MCF 10A (cell line): ENCODE measurements at regions of chr10 and their contacts with region 1.

Region 1: DNA sequence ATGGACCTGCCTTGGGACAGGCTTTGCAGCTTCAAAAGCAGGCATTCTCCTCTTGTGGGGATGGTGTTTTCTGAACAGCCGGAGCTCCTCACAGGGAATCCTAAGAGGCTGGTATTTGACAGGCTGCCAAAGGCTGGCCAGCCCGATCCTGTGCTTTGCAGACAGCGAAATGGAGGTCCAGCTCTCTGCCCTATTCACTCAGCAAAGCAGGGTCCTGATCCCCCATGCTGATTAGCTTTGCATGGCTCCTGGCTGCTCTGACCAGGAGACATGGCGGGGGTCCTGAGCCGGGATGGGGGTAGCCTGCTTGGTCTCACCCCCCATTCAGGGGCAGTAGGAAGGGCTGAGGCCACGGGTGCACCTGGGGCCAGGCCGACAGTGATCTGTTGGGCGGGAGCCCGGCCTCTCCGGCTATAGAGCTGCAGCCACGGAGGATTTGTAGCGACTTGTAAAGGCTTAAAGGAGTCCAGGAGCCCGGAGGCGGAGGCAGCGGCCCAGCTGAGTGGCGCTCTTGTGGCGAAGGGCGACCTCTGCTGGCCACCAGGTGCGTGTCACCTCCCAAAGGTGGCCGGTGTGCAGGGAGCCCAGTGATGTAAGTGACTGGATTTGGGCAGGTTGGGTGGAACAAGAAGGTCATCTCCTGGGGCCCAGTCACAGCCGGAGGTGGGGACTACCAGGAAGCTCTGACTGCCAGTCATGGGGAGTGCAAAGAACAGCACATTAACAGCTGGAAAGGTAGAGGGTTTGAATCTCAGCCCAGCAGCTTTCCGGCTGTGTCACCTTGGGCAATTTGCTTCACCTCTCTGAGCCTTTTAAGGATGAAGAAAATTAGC is 126.5 kb downstream of the ZMIZ1 start:
- DNase-seq: peak; percentile 87
- H3K4me3 Mint-ChIP-seq: no peak overlapping the region
- H3K27ac Mint-ChIP-seq: no peak overlapping the region
- H3K4me1 Mint-ChIP-seq: peaks cover 27% of the 10 kb centered on the region
- H3K27me3 Mint-ChIP-seq: no peaks in the 10 kb centered on the region
- CTCF ChIP-seq: peak; percentile 96

Region 2: GRCh38 chr10:78211561-78212051 is 983.7 kb before region 1 on chr10:
- CTCF ChIA-PET with region 1: interaction called, 10 read pairs
- POLR2A ChIA-PET with region 1: interaction called, 3 read pairs
- intact Hi-C with region 1: loop called (anchors 1 kb)
- DNase-seq: peak; percentile 59
- H3K4me3 Mint-ChIP-seq: no peak overlapping the region
- H3K27ac Mint-ChIP-seq: peak overlapping the region; percentile 64
- H3K4me1 Mint-ChIP-seq: peaks cover 10% of the 10 kb centered on the region
- H3K27me3 Mint-ChIP-seq: peaks cover 34% of the 10 kb centered on the region
- CTCF ChIP-seq: peak; percentile 62

Region 3: GRCh38 chr10:78432583-78432982 is 762.7 kb before region 1 on chr10:
- CTCF ChIA-PET with region 1: interaction called, 11 read pairs
- POLR2A ChIA-PET with region 1: no interaction called
- intact Hi-C with region 1: no loop called
- DNase-seq: no peak
- H3K4me3 Mint-ChIP-seq: no peak overlapping the region
- H3K27ac Mint-ChIP-seq: no peak overlapping the region
- H3K4me1 Mint-ChIP-seq: no peaks in the 10 kb centered on the region
- H3K27me3 Mint-ChIP-seq: peaks cover 76% of the 10 kb centered on the region
- CTCF ChIP-seq: no peak

Region 4: GRCh38 chr10:78756604-78757349 is 438.5 kb before region 1 on chr10:
- CTCF ChIA-PET with region 1: no interaction called
- POLR2A ChIA-PET with region 1: no interaction called
- intact Hi-C with region 1: loop called (anchors 5 kb)
- DNase-seq: peak; percentile 98
- H3K4me3 Mint-ChIP-seq: peak overlapping the region; percentile 41
- H3K27ac Mint-ChIP-seq: peak overlapping the region; percentile 74
- H3K4me1 Mint-ChIP-seq: peaks cover 26% of the 10 kb centered on the region
- H3K27me3 Mint-ChIP-seq: peaks cover 26% of the 10 kb centered on the region
- CTCF ChIP-seq: no peak

Region 5: DNA sequence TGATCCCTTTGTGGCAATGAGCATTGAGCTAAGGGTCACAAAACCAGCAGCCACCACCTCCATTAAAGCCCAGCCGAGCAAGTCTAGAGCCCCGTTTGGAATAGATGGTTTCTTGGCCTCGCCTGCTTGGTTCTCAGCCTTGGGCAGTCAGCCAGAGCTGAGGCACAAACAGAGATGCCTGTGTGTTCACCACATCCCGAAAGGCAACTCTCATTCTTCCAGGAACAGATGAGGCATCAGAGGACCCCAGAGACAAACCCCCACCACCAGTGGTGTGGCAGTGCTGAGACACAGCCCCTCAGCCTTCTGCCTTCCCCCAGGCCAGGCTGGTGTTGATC is 329.8 kb before region 1 on chr10:
- CTCF ChIA-PET with region 1: no interaction called
- POLR2A ChIA-PET with region 1: no interaction called
- intact Hi-C with region 1: no loop called
- DNase-seq: no peak
- H3K4me3 Mint-ChIP-seq: no peak overlapping the region
- H3K27ac Mint-ChIP-seq: no peak overlapping the region
- H3K4me1 Mint-ChIP-seq: peaks cover 6% of the 10 kb centered on the region
- H3K27me3 Mint-ChIP-seq: no peaks in the 10 kb centered on the region
- CTCF ChIP-seq: no peak

Region 6: DNA sequence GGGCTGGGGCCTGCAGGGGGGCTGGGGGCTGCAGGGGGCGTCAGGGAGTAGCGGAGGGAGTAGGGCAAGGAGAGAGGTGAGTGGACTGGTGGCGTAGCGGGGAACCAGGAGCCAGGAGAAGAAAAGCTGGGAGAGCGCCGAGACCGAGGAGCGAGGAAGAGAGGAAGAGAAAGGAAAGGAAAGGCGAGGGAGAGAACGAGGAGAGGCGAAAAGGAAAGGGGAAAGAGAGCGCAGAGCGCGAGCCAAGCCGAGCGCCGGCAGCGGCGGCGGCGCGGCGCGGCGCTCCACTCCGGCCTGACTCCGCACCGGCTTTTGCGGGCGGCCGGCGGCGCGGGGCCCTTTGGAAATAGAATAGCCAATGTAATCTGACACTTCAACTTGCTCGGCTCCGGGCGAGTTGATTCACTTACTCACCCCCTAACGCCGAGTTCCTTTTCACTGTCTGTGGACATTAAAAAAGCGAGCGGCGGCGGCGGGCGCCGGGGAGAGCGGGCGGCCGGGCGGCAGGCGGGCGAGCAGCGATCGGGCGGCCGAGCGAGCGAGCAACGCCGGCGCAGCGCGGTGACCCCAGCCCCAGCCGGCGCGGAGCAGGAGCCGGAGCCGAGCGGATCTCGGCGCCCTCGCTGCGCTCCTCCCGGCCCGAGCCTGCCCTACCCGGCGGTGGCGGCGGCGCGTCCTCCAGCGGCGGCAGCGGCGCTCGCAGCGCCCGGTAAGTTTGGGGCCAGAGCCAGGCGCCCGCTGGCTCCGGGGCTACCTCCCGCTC is 126.6 kb before region 1 on chr10 and contains the start of gene ZMIZ1:
- CTCF ChIA-PET with region 1: interaction called, 17 read pairs
- POLR2A ChIA-PET with region 1: interaction called, 15 read pairs
- intact Hi-C with region 1: loop called (anchors 1 kb)
- DNase-seq: peak; percentile 95
- H3K4me3 Mint-ChIP-seq: peak within 1 kb of the TSS; percentile 84
- H3K27ac Mint-ChIP-seq: peak within 1 kb of the TSS; percentile 50
- H3K4me1 Mint-ChIP-seq: peaks cover 20% of the 10 kb centered on the region
- H3K27me3 Mint-ChIP-seq: no peaks in the 10 kb centered on the region
- CTCF ChIP-seq: peak; percentile 19
- total RNA-seq, gene ZMIZ1: 15.5 and 20.3 TPM in 2 replicates

Region 7: DNA sequence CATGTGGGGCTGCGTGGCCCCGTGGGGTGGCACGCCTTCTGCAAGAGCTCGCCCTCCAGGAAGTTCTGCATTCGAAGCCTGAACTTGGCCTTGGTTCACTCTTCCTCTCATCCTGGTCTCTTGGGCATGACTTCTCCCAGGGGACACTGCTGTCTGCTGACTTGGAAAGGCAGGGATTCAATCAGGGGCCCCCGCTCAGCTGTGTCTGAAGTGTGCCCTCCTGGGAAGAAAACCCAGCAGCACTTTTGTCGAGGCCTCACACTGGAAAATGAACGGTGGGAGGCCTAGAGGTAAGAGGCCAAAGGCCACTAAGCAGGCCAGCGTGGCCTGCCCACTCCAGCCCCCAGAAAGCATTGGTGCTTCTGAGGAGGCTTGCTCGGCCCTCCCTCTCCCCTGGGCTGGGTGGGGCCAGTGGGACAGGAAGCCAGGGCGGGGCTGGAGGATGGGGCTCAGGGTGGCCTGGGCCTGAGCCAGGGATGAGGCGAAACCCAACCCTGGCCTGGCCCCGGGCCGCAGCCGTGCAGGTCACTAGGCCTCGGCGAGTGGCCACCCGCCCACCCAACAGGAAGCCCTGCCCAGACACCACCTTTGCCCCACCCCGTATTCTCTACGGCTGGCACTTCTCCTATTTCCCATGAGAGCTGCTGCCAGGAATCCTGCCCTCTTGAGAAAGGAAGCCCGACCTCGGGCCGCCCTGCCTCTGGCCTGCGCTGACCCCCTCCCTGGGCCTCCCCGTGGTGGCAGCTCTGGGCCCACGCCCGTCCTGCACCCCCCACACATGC is 45.5 kb before region 1 on chr10:
- CTCF ChIA-PET with region 1: interaction called, 11 read pairs
- POLR2A ChIA-PET with region 1: interaction called, 4 read pairs
- intact Hi-C with region 1: loop called (anchors 2 kb)
- DNase-seq: peak; percentile 97
- H3K4me3 Mint-ChIP-seq: peak overlapping the region; percentile 16
- H3K27ac Mint-ChIP-seq: peak overlapping the region; percentile 77
- H3K4me1 Mint-ChIP-seq: peaks cover 45% of the 10 kb centered on the region
- H3K27me3 Mint-ChIP-seq: no peaks in the 10 kb centered on the region
- CTCF ChIP-seq: no peak

Region 8: GRCh38 chr10:79178614-79179163 is 16.6 kb before region 1 on chr10:
- CTCF ChIA-PET with region 1: interaction called, 13 read pairs
- POLR2A ChIA-PET with region 1: interaction called, 6 read pairs
- intact Hi-C with region 1: no loop called
- DNase-seq: no peak
- H3K4me3 Mint-ChIP-seq: no peak overlapping the region
- H3K27ac Mint-ChIP-seq: no peak overlapping the region
- H3K4me1 Mint-ChIP-seq: peaks cover 21% of the 10 kb centered on the region
- H3K27me3 Mint-ChIP-seq: no peaks in the 10 kb centered on the region
- CTCF ChIP-seq: no peak

Region 9: DNA sequence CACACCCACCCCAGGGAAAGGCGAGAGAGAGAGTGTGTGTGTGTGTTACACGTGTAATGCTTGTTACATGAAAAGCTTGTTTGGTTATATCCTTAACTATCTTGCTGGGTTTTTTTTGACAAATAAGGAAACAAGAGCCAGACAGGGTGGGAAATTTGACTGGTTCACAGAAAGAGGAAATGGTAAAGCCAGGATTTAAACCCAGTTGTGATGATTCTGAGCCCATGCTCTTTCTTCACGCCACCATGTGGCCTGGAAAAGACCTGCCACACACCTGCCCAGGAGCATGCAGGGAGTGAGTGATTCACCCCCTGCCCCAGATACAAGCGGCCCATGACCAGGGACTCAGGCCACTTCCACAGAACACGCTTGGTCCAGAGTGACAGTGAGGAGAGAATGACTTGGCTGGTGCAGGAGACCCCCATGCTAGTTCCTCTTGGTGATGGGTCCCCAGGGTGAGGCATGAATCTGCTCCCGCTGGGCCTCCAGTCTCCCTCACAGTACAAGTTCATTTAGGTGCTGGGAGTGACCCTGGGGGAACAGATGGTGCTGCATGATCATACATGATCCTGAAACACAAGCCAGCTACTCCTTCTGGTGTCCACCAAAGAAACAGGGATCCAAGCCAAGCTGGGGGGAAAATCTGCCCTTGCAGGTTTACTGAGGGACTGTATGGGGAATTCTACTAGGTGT is 296.0 kb after region 1 on chr10:
- CTCF ChIA-PET with region 1: no interaction called
- POLR2A ChIA-PET with region 1: no interaction called
- intact Hi-C with region 1: no loop called
- DNase-seq: peak; percentile 14
- H3K4me3 Mint-ChIP-seq: no peak overlapping the region
- H3K27ac Mint-ChIP-seq: no peak overlapping the region
- H3K4me1 Mint-ChIP-seq: peaks cover 15% of the 10 kb centered on the region
- H3K27me3 Mint-ChIP-seq: no peaks in the 10 kb centered on the region
- CTCF ChIP-seq: no peak